ENCODE measurements at regions of chr17 and their contacts with region 1.

Region 1: GRCh38 chr17:75109407-75110233 is at the start of gene ARMC7:
- DNase-seq: peak; percentile 94
- H3K4me3 ChIP-seq: peak within 1 kb of the TSS; percentile 65 to 91 (median 76)
- H3K27ac ChIP-seq: peak within 1 kb of the TSS; percentile 66 to 81 (median 77)
- H3K4me1 ChIP-seq: peaks cover 0 to 42% (median 28%) of the 10 kb centered on the region in 4 donors
- H3K27me3 ChIP-seq: no peaks in the 10 kb centered on the region
- CTCF ChIP-seq: no peak
- EP300 ChIP-seq: no peak
- POLR2A ChIP-seq: peak; percentile 61 to 75
- total RNA-seq, gene ARMC7: 3.2 to 7.8 (median 4.3) TPM

Region 2: DNA sequence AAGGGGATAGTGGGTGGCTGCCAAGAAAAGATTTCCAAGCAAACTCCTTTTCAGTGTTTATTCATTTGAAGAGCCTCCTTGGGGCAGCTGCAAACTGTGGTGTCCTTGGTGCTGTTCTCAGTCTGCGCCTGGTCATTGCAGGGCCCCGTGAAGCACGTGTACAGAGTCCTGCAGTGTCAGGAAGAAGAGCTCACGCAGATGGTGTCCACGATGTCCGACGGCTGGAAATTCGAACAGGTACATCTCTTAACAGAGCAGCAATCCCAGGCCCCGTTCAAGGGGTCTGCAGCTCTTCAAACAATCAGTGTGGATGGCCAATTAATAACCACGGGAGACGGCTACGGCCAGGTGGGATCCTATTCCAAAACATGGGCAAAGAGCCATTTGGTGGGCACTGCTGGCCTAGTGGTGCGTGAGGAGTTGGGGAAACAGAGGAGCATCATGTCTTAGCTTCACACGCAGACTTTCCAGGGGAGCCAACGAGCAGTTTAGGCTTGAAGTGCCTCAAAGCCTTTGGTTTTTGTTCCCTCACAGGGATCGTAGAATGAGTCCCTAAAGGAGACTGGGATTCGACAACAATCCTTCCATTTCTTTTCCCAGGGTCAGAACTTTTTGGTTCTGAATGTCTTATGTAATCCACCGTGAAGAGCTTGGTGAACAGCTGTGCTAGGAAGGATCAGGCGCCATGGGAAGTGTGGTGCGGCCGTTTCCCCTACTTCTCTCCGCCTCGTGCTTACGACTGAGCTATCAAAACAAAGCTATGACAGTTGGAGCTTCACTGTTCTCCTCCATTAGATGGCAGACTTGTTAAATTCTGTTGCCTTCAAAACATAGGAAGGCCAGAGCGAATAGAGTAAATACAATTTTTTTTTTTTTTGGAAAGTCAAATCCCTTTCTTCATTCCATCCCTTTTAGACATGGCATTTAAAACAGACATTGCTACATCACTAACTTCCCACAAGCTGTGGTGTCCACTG is 50.0 kb before region 1 on chr17:
- intact Hi-C with region 1: loop called (anchors 5 kb)
- DNase-seq: peak; percentile 82
- H3K4me3 ChIP-seq: no peak overlapping the region
- H3K27ac ChIP-seq: peak overlapping the region; percentile 70 to 79 (median 74)
- H3K4me1 ChIP-seq: peaks cover 0 to 18% (median 13%) of the 10 kb centered on the region in 4 donors
- H3K27me3 ChIP-seq: no peaks in the 10 kb centered on the region
- CTCF ChIP-seq: peak; percentile 30 to 45 (median 36)
- EP300 ChIP-seq: no peak
- POLR2A ChIP-seq: no peak

Region 3: GRCh38 chr17:75131280-75132017 is 21.8 kb after region 1 on chr17 and contains the start of gene NT5C:
- intact Hi-C with region 1: loop called (anchors 1 kb)
- DNase-seq: peak; percentile 91
- H3K4me3 ChIP-seq: peak within 1 kb of the TSS; percentile 68 to 86 (median 74)
- H3K27ac ChIP-seq: peak within 1 kb of the TSS; percentile 88 to 91 (median 88)
- H3K4me1 ChIP-seq: peaks cover 0 to 23% (median 11%) of the 10 kb centered on the region in 4 donors
- H3K27me3 ChIP-seq: no peaks in the 10 kb centered on the region
- CTCF ChIP-seq: peak; percentile 43 to 72 (median 58)
- EP300 ChIP-seq: no peak
- POLR2A ChIP-seq: no peak
- total RNA-seq, gene NT5C: 60.7 to 109 (median 82.4) TPM

Region 4: GRCh38 chr17:75173526-75173925 is 63.9 kb after region 1 on chr17:
- intact Hi-C with region 1: loop called (anchors 2 kb)
- DNase-seq: no peak
- H3K4me3 ChIP-seq: no peak overlapping the region
- H3K27ac ChIP-seq: no peak overlapping the region
- H3K4me1 ChIP-seq: peaks cover 0 to 17% (median 2%) of the 10 kb centered on the region in 4 donors
- H3K27me3 ChIP-seq: no peaks in the 10 kb centered on the region
- CTCF ChIP-seq: no peak
- EP300 ChIP-seq: no peak
- POLR2A ChIP-seq: no peak

Region 5: GRCh38 chr17:75182569-75183450 is 73.2 kb after region 1 on chr17 and contains the start of gene SUMO2:
- intact Hi-C with region 1: loop called (anchors 5 kb)
- DNase-seq: peak; percentile 97
- H3K4me3 ChIP-seq: peak within 1 kb of the TSS; percentile 79 to 100 (median 100)
- H3K27ac ChIP-seq: peak within 1 kb of the TSS; percentile 92 to 99 (median 98)
- H3K4me1 ChIP-seq: peaks cover 0 to 37% (median 25%) of the 10 kb centered on the region in 4 donors
- H3K27me3 ChIP-seq: no peaks in the 10 kb centered on the region
- CTCF ChIP-seq: peak in 1 of 4 experiments; percentile 46
- EP300 ChIP-seq: no peak
- POLR2A ChIP-seq: peak; percentile 36 to 62
- total RNA-seq, gene SUMO2: 63.0 to 109 (median 87.1) TPM

Region 6: GRCh38 chr17:75205037-75205792 is 95.6 kb after region 1 on chr17 and contains the start of gene NUP85:
- intact Hi-C with region 1: loop called (anchors 1 kb)
- DNase-seq: peak; percentile 97
- H3K4me3 ChIP-seq: peak within 1 kb of the TSS; percentile 69 to 98 (median 87)
- H3K27ac ChIP-seq: peak within 1 kb of the TSS; percentile 91 to 93 (median 92)
- H3K4me1 ChIP-seq: peaks cover 0 to 27% (median 20%) of the 10 kb centered on the region in 4 donors
- H3K27me3 ChIP-seq: no peaks in the 10 kb centered on the region
- CTCF ChIP-seq: peak in 1 of 4 experiments; percentile 11
- EP300 ChIP-seq: no peak
- POLR2A ChIP-seq: peak; percentile 66 to 73
- total RNA-seq, gene NUP85: 21.1 to 32.2 (median 29.7) TPM